ENCODE measurements at regions of chr2 and their contacts with region 1.

Region 1: GRCh38 chr2:235746257-235747084 is 252.6 kb downstream of the AGAP1 start:
- DNase-seq: peak; percentile 48
- ATAC-seq: peak; percentile 89

Region 2: GRCh38 chr2:235077046-235077445 is 669.4 kb before region 1 on chr2:
- intact Hi-C with region 1: no loop called
- DNase-seq: no peak
- ATAC-seq: no peak

Region 3: DNA sequence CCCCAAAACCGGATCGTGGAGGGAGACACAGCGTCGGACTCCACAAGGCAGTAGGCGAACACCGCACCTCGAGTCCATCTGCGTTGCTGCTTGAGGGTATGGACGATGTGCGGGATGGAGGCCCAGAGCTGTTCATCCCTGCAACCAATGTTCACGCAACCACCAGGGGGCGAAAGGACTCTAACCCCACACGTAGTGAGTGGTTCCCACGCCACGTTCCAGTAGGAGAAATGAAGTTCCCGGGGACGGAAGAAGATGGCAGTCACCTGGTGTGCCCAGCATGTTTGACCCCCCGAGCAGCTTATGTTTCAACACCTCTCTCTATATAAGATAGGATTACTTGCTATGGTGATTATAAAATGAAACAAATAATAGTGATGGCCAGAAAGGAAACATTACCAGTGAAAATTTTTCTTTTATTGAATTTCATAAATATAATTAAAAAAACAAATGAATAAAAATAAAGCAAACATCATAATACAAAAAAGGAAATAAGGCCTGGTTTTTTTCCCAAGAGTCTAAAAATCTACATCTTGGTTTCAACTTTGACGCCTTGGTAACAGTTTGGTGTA is 610.4 kb before region 1 on chr2:
- intact Hi-C with region 1: loop called (anchors 5 kb)
- DNase-seq: peak; percentile 88
- ATAC-seq: peak; percentile 94

Region 4: GRCh38 chr2:235595422-235596010 is 151.0 kb before region 1 on chr2:
- intact Hi-C with region 1: loop called (anchors 2 kb)
- DNase-seq: peak; percentile 81
- ATAC-seq: peak; percentile 77

Region 5: DNA sequence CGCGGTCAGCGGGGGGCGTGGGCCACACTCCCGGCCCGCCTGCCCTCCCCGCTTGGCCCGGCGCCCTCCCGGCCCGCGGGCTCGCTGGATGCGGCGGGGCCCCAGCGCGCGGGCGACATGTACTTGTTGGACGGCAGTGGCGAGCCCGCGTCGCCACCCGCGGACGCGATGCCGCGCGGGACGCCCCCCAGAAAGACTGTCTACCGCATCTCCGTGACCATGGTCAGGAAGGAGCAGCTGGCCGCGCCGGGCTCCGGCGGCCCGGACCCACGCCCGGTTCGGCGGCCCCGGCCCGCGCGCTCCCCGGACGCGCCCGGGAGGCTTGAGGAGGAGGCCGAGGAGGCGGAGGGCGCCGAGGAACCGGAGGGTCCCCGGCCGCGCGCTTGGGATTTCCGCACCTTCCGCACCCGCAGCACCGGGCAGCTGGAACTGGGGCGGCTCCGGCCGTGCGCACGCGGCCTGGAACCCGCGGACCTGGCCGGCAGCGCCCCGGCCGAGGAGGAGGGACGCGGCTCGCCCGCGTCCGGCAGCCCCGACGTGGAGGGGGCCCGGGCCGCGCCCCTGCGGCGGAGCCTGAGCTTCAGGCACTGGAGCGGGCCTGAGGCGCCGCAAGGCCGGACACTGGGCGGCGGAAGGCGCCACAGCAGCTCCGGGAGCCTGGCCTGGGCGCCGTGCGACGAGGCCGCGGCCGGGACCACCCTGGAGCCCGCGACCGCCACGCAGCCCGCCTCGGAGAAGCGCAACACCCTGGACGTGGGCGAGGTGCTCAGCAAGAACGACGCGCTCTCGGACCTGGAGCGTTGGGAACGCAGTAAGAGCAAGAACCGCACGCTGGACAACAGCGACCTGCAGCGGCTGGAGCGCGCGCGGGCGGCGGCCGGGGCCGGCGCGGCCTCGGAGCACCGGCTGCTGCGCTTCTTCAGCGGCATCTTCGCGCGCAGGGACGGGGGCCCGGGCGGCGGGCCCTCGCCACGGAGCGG is 76.2 kb before region 1 on chr2:
- intact Hi-C with region 1: loop called (anchors 2 kb)
- DNase-seq: peak; percentile 82
- ATAC-seq: peak; percentile 79